CD4-positive, alpha-beta T cell (primary cell): ENCODE measurements at regions of chr10 and their contacts with region 1.

Region 1: DNA sequence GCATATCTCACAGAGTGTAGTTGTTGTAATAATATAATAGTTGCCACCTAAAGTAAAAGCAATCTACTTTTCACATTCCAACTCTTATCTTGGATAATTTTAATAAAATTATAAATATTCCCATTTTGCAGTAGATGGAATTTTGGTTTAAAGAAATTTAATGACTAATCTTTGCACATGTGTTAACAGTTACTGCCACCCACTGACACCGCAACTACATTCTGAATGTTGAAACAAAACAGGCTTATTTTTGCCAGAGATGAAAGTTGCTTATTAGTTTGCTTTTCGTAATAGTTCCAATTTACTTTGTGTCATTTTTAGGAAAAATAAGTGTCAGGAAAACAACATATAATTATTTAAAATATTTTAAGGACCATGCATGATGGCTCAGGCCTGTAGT is 557.5 kb upstream of the PCDH15 start:
- DNase-seq: no peak
- ATAC-seq: no peak
- H3K4me3 ChIP-seq: no peak overlapping the region
- H3K4me3 Mint-ChIP-seq: no peak overlapping the region
- H3K27ac ChIP-seq: no peak overlapping the region
- H3K27ac Mint-ChIP-seq: no peak overlapping the region
- H3K4me1 ChIP-seq: no peaks in the 10 kb centered on the region
- H3K4me1 Mint-ChIP-seq: no peaks in the 10 kb centered on the region
- H3K27me3 ChIP-seq: no peaks in the 10 kb centered on the region
- H3K27me3 Mint-ChIP-seq: no peaks in the 10 kb centered on the region
- CTCF ChIP-seq: no peak

Region 2: DNA sequence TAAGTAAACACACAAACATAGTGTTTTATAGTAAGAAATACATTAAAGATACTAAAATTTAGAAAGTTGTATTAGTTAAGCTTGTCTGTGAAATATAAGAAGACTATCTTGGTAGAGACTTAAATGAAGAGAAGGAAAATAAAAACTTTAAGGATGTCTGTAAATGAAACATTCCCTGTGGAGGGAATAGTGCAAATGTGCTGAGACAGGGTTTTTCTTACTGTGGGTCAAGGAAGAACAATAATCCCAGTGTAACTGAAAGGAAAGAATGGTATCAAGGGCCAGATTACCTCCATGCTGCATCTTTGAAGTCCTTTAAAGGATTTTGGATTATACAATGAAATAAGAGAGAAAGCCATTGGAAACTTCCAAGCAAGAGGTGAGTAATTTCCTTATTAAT is 10.0 kb before region 1 on chr10:
- CTCF ChIA-PET with region 1: no interaction called
- POLR2A ChIA-PET with region 1: no interaction called
- intact Hi-C with region 1: no loop called
- DNase-seq: no peak
- ATAC-seq: no peak
- H3K4me3 ChIP-seq: no peak overlapping the region
- H3K4me3 Mint-ChIP-seq: no peak overlapping the region
- H3K27ac ChIP-seq: no peak overlapping the region
- H3K27ac Mint-ChIP-seq: no peak overlapping the region
- H3K4me1 ChIP-seq: no peaks in the 10 kb centered on the region
- H3K4me1 Mint-ChIP-seq: no peaks in the 10 kb centered on the region
- H3K27me3 ChIP-seq: no peaks in the 10 kb centered on the region
- H3K27me3 Mint-ChIP-seq: no peaks in the 10 kb centered on the region
- CTCF ChIP-seq: no peak

Region 3: DNA sequence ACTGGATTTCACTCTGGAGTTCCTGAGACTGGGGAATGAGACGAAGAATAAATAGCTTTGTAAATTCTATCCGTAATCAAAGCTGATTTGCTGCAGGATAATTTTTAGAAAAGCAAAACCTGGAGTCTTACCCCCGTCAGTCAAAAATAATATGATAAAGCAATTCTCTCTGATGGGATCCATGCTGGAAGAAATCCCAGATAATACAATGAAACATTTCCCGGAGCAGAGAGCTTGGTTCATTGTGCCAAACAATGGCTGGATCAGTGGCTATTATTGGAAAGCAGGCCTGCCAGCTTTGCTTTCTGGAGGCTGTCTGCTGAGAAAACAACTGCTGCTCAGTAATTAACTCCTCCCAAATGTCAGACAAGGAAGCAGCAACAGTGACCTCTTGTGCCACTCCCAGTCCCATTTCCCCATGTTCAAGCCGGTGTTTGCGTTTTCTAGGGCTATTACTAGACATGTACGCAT is 51.9 kb after region 1 on chr10:
- CTCF ChIA-PET with region 1: no interaction called
- POLR2A ChIA-PET with region 1: no interaction called
- intact Hi-C with region 1: loop called in 1 of 2 experiments (anchors 5 kb)
- DNase-seq: no peak
- ATAC-seq: no peak
- H3K4me3 ChIP-seq: no peak overlapping the region
- H3K4me3 Mint-ChIP-seq: no peak overlapping the region
- H3K27ac ChIP-seq: no peak overlapping the region
- H3K27ac Mint-ChIP-seq: no peak overlapping the region
- H3K4me1 ChIP-seq: no peaks in the 10 kb centered on the region
- H3K4me1 Mint-ChIP-seq: no peaks in the 10 kb centered on the region
- H3K27me3 ChIP-seq: no peaks in the 10 kb centered on the region
- H3K27me3 Mint-ChIP-seq: no peaks in the 10 kb centered on the region
- CTCF ChIP-seq: no peak